CD8-positive, alpha-beta T cell (primary cell): ENCODE measurements at regions of chr12 and their contacts with region 1.

Region 1: DNA sequence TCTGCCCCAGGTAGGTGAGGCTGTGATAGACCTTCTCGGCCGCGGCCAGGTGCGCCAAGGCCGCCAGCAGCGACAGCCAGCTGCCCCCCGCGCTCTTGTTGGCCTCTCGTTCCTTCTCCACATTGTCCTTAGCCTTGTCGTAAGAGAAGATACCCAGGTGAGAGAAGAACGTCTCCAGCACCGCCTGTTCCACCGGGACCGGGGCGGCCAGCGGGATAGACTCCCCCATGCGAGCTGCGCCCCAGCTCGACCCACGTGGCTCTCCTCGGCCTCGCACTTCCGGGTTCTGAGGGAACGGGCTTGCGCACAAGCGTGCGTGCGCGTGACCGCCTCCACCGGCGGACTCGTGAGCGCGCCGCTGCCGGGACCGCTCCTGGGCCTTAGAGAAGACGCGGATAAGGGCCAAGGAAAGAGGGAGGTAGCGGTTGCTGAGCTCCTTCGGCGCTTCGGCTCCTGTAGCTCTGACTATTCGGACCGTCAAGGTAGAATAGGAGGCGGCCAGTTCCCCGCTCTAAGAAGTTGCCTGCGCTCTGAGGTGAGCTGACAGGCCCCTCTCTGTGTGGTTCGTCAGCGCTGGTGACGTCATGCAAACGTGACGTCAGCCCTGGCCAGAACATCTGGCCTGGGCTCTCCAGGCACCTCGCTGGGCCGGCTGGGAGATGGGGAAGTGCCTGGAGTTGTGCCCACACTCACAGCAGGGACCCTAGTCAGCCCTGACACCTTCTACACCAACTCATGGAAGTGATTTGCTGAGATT is at the start of gene KICS2:
- DNase-seq: peak; percentile 82 to 97 (median 90)
- ATAC-seq: peak; percentile 82
- H3K4me3 ChIP-seq: peak within 1 kb of the TSS; percentile 67 to 94
- H3K4me3 Mint-ChIP-seq: peak within 1 kb of the TSS; percentile 93
- H3K27ac ChIP-seq: peak within 1 kb of the TSS; percentile 95 to 97
- H3K27ac Mint-ChIP-seq: peak within 1 kb of the TSS; percentile 98
- H3K4me1 ChIP-seq: peaks cover 12% of the 10 kb centered on the region
- H3K4me1 Mint-ChIP-seq: peaks cover 39% of the 10 kb centered on the region
- H3K27me3 ChIP-seq: no peaks in the 10 kb centered on the region
- H3K27me3 Mint-ChIP-seq: peaks cover 8% of the 10 kb centered on the region
- CTCF ChIP-seq: no peak
- total RNA-seq, gene KICS2: 13.9 to 15.5 TPM

Region 2: GRCh38 chr12:62466594-62467491 is 1755.3 kb before region 1 on chr12 and contains the start of gene MON2:
- CTCF ChIA-PET with region 1: no interaction called
- POLR2A ChIA-PET with region 1: no interaction called
- intact Hi-C with region 1: loop called (anchors 5 to 10 kb)
- DNase-seq: peak; percentile 71 to 94 (median 86)
- ATAC-seq: peak; percentile 92
- H3K4me3 ChIP-seq: peak within 1 kb of the TSS; percentile 96 to 98
- H3K4me3 Mint-ChIP-seq: peak within 1 kb of the TSS; percentile 92
- H3K27ac ChIP-seq: peak within 1 kb of the TSS; percentile 85 to 96
- H3K27ac Mint-ChIP-seq: peak within 1 kb of the TSS; percentile 93
- H3K4me1 ChIP-seq: peaks cover 31% of the 10 kb centered on the region
- H3K4me1 Mint-ChIP-seq: peaks cover 29% of the 10 kb centered on the region
- H3K27me3 ChIP-seq: peaks cover 0 to 2% of the 10 kb centered on the region in 2 experiments
- H3K27me3 Mint-ChIP-seq: no peaks in the 10 kb centered on the region
- CTCF ChIP-seq: no peak
- total RNA-seq, gene MON2: 44.2 to 48.9 TPM

Region 3: DNA sequence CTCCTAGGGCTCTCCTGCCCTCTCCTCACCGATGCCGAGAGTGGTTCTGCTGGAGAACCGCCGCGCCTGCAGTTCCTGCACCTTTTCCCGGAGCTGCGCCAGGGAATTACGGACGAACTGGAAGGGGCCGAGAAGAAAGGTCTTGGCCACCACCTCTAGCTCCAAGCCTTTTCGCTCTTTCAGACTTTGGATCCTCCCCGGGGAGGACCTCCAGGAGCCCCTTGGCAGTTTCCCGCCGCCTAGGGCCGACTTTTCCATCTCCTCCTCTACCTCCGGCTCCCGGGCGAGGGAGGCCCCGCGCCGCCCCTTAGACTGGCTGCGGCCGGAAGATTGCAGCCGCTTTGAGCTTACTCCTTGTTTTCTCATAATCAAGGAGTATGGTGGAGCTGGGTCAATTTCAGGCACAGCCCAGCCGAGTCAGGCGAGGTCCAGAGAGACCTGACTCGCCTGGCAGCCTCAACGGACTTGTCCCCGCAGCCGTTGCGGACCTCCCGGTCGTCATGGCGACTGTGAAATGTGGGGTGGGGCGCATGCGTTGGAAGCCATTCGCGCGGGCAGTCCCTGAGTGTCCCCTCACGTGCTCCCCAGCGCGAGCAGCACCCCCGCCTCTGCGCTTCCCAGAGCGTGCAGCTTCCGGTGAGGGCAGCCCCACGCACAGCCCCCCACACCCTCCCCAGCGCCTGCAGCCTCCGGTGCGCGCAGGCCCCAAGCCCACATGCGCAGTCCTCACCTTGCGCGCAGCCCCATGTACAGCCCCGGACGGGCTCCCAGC is 554.0 kb before region 1 on chr12 and contains the start of gene DPY19L2:
- CTCF ChIA-PET with region 1: no interaction called
- POLR2A ChIA-PET with region 1: interaction called, 3 read pairs
- intact Hi-C with region 1: loop called in 1 of 2 experiments (anchors 1 kb)
- DNase-seq: peak; percentile 21 to 88 (median 56)
- ATAC-seq: peak; percentile 90
- H3K4me3 ChIP-seq: peak within 1 kb of the TSS; percentile 68 to 73
- H3K4me3 Mint-ChIP-seq: peak within 1 kb of the TSS; percentile 95
- H3K27ac ChIP-seq: peak within 1 kb of the TSS; percentile 51 to 83
- H3K27ac Mint-ChIP-seq: peak within 1 kb of the TSS; percentile 72
- H3K4me1 ChIP-seq: peaks cover 7% of the 10 kb centered on the region
- H3K4me1 Mint-ChIP-seq: peaks cover 36% of the 10 kb centered on the region
- H3K27me3 ChIP-seq: no peaks in the 10 kb centered on the region
- H3K27me3 Mint-ChIP-seq: no peaks in the 10 kb centered on the region
- CTCF ChIP-seq: no peak
- total RNA-seq, gene DPY19L2: 3.4 to 3.6 TPM

Region 4: GRCh38 chr12:63779498-63780481 is 442.4 kb before region 1 on chr12 and contains the start of gene RXYLT1:
- CTCF ChIA-PET with region 1: no interaction called
- POLR2A ChIA-PET with region 1: no interaction called
- intact Hi-C with region 1: loop called (anchors 1 to 5 kb)
- DNase-seq: peak; percentile 66 to 93 (median 83)
- ATAC-seq: peak; percentile 93
- H3K4me3 ChIP-seq: peak within 1 kb of the TSS; percentile 76 to 79
- H3K4me3 Mint-ChIP-seq: peak within 1 kb of the TSS; percentile 96
- H3K27ac ChIP-seq: peak within 1 kb of the TSS; percentile 74 to 87
- H3K27ac Mint-ChIP-seq: peak within 1 kb of the TSS; percentile 96
- H3K4me1 ChIP-seq: peaks cover 8% of the 10 kb centered on the region
- H3K4me1 Mint-ChIP-seq: peaks cover 32% of the 10 kb centered on the region
- H3K27me3 ChIP-seq: no peaks in the 10 kb centered on the region
- H3K27me3 Mint-ChIP-seq: no peaks in the 10 kb centered on the region
- CTCF ChIP-seq: no peak
- total RNA-seq, gene RXYLT1: 5.5 to 5.8 TPM

Region 5: DNA sequence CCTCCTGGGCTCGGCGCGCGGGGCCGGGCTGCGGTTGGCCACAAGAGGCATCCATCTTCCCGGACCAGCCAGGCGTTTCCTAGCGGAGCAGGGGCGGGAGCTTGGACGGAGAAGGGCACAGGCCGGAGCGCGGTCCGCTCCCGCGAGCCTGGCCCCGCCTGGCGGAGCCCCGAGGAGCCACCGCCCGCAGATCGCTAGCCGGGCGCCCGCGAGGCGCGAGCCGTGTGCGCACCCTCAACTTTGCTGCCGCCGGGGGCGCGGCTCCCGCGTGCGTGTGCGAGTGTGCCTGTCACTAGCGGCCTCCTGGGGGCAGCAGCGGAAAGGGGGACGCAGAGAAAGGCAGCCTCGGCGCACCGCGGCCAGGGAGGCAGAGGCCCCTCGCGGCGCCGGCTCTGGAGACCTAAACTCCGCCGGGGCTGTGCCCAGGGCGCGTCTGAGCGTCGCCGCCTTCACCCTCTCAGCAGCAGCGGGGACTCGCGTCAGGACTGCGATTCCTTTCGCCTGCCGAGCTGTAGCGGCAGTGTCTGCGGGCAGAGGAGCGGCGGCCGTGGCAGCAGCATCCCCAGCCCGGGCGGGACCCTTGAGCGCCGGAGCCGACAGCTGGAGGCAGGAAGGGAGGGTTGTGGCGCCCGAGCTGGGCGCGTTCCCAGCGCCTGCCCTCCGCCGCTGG is 378.3 kb before region 1 on chr12:
- CTCF ChIA-PET with region 1: interaction called, 4 read pairs
- POLR2A ChIA-PET with region 1: no interaction called
- intact Hi-C with region 1: loop called in 1 of 2 experiments (anchors 1 kb)
- DNase-seq: peak; percentile 61 to 91 (median 78)
- ATAC-seq: peak; percentile 94
- H3K4me3 ChIP-seq: peak overlapping the region; percentile 49 to 69
- H3K4me3 Mint-ChIP-seq: peak overlapping the region; percentile 76
- H3K27ac ChIP-seq: no peak overlapping the region
- H3K27ac Mint-ChIP-seq: no peak overlapping the region
- H3K4me1 ChIP-seq: peaks cover 7% of the 10 kb centered on the region
- H3K4me1 Mint-ChIP-seq: peaks cover 10% of the 10 kb centered on the region
- H3K27me3 ChIP-seq: peaks cover 0 to 13% of the 10 kb centered on the region in 2 experiments
- H3K27me3 Mint-ChIP-seq: peaks cover 32% of the 10 kb centered on the region
- CTCF ChIP-seq: peak; percentile 78

Region 6: GRCh38 chr12:64065881-64066451 is 156.2 kb before region 1 on chr12:
- CTCF ChIA-PET with region 1: no interaction called
- POLR2A ChIA-PET with region 1: no interaction called
- intact Hi-C with region 1: no loop called
- DNase-seq: no peak
- ATAC-seq: no peak
- H3K4me3 ChIP-seq: no peak overlapping the region
- H3K4me3 Mint-ChIP-seq: no peak overlapping the region
- H3K27ac ChIP-seq: no peak overlapping the region
- H3K27ac Mint-ChIP-seq: no peak overlapping the region
- H3K4me1 ChIP-seq: no peaks in the 10 kb centered on the region
- H3K4me1 Mint-ChIP-seq: no peaks in the 10 kb centered on the region
- H3K27me3 ChIP-seq: no peaks in the 10 kb centered on the region
- H3K27me3 Mint-ChIP-seq: peaks cover 2% of the 10 kb centered on the region
- CTCF ChIP-seq: no peak

Region 7: GRCh38 chr12:64451687-64452558 is 229.7 kb after region 1 on chr12 and contains the start of gene TBK1:
- CTCF ChIA-PET with region 1: no interaction called
- POLR2A ChIA-PET with region 1: no interaction called
- intact Hi-C with region 1: loop called in 1 of 2 experiments (anchors 2 kb)
- DNase-seq: peak; percentile 8 to 76 (median 51)
- ATAC-seq: peak; percentile 64
- H3K4me3 ChIP-seq: peak within 1 kb of the TSS; percentile 88 to 99
- H3K4me3 Mint-ChIP-seq: peak within 1 kb of the TSS; percentile 89
- H3K27ac ChIP-seq: peak within 1 kb of the TSS; percentile 76 to 93
- H3K27ac Mint-ChIP-seq: peak within 1 kb of the TSS; percentile 90
- H3K4me1 ChIP-seq: peaks cover 8% of the 10 kb centered on the region
- H3K4me1 Mint-ChIP-seq: peaks cover 40% of the 10 kb centered on the region
- H3K27me3 ChIP-seq: no peaks in the 10 kb centered on the region
- H3K27me3 Mint-ChIP-seq: no peaks in the 10 kb centered on the region
- CTCF ChIP-seq: no peak
- total RNA-seq, gene TBK1: 6.2 to 6.7 TPM

Region 8: GRCh38 chr12:64759035-64759901 is 537.1 kb after region 1 on chr12 and contains the start of gene GNS:
- CTCF ChIA-PET with region 1: no interaction called
- POLR2A ChIA-PET with region 1: no interaction called
- intact Hi-C with region 1: loop called in 1 of 2 experiments (anchors 10 kb)
- DNase-seq: peak; percentile 81 to 95 (median 92)
- ATAC-seq: peak; percentile 86
- H3K4me3 ChIP-seq: peak within 1 kb of the TSS; percentile 70 to 80
- H3K4me3 Mint-ChIP-seq: peak within 1 kb of the TSS; percentile 97
- H3K27ac ChIP-seq: peak within 1 kb of the TSS; percentile 44 to 80
- H3K27ac Mint-ChIP-seq: peak within 1 kb of the TSS; percentile 93
- H3K4me1 ChIP-seq: peaks cover 24% of the 10 kb centered on the region
- H3K4me1 Mint-ChIP-seq: peaks cover 57% of the 10 kb centered on the region
- H3K27me3 ChIP-seq: no peaks in the 10 kb centered on the region
- H3K27me3 Mint-ChIP-seq: no peaks in the 10 kb centered on the region
- CTCF ChIP-seq: no peak
- total RNA-seq, gene GNS: 6.3 to 7.7 TPM